Naive thymus-derived CD4-positive, alpha-beta T cell (primary cell): ENCODE measurements at regions of chr9 and their contacts with region 1.

Region 1: GRCh38 chr9:75918154-75918553 is 27.7 kb downstream of the PCSK5 start:
- DNase-seq: no peak
- ATAC-seq: no peak
- H3K4me3 ChIP-seq: no peak overlapping the region
- H3K4me3 Mint-ChIP-seq: no peak overlapping the region
- H3K27ac ChIP-seq: no peak overlapping the region
- H3K27ac Mint-ChIP-seq: no peak overlapping the region
- H3K4me1 ChIP-seq: peaks cover 0 to 4% of the 10 kb centered on the region in 2 donors
- H3K4me1 Mint-ChIP-seq: peaks cover 0 to 81% (median 56%) of the 10 kb centered on the region in 7 donors
- H3K27me3 ChIP-seq: no peaks in the 10 kb centered on the region
- H3K27me3 Mint-ChIP-seq: no peaks in the 10 kb centered on the region

Region 2: DNA sequence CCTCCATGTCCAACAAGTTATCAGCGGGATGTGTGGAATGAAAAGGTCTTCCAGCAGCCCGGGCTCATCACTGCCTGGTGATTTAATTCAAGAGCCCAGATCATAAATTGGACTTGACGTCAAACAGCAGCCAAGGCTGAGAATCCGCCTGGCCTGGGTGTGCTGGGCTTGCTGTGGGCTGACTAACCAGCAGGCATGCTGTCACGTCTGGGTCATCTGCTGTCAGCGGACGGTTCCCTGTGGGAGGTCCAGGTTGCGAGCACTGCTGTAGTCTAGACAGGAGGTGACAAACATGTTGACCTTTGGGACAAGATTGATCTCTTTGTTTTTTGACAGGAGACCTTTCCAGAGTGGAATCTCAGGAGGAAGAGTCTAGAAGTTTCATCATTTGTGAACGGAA is 540.1 kb before region 1 on chr9:
- CTCF ChIA-PET with region 1: no interaction called
- POLR2A ChIA-PET with region 1: no interaction called
- intact Hi-C with region 1: no loop called
- DNase-seq: no peak
- ATAC-seq: no peak
- H3K4me3 ChIP-seq: no peak overlapping the region
- H3K4me3 Mint-ChIP-seq: no peak overlapping the region
- H3K27ac ChIP-seq: no peak overlapping the region
- H3K27ac Mint-ChIP-seq: no peak overlapping the region
- H3K4me1 ChIP-seq: no peaks in the 10 kb centered on the region
- H3K4me1 Mint-ChIP-seq: no peaks in the 10 kb centered on the region
- H3K27me3 ChIP-seq: no peaks in the 10 kb centered on the region
- H3K27me3 Mint-ChIP-seq: peaks cover 0 to 5% (median 0%) of the 10 kb centered on the region in 5 donors

Region 3: GRCh38 chr9:75930730-75931321 is 12.7 kb after region 1 on chr9:
- CTCF ChIA-PET with region 1: interaction called, 3 read pairs
- POLR2A ChIA-PET with region 1: interaction called, 3 read pairs
- intact Hi-C with region 1: loop called in 1 of 2 experiments (anchors 1 kb)
- DNase-seq: no peak
- ATAC-seq: no peak
- H3K4me3 ChIP-seq: no peak overlapping the region
- H3K4me3 Mint-ChIP-seq: no peak overlapping the region
- H3K27ac ChIP-seq: no peak overlapping the region
- H3K27ac Mint-ChIP-seq: peak overlapping the region in 4 of 9 donors; percentile 2 to 14 (median 6)
- H3K4me1 ChIP-seq: no peaks in the 10 kb centered on the region
- H3K4me1 Mint-ChIP-seq: peaks cover 0 to 62% (median 47%) of the 10 kb centered on the region in 7 donors
- H3K27me3 ChIP-seq: no peaks in the 10 kb centered on the region
- H3K27me3 Mint-ChIP-seq: no peaks in the 10 kb centered on the region